Activated CD8-positive, alpha-beta T cell treated with anti-CD3 and anti-CD28 coated beads for 36 hours (primary cell): ENCODE measurements at regions of chr2 and their contacts with region 1.

Region 1: GRCh38 chr2:241636255-241636999 is 531 bp downstream of the THAP4 start:
- DNase-seq: peak; percentile 48
- ATAC-seq: peak; percentile 49
- H3K4me3 Mint-ChIP-seq: peak overlapping the region; percentile 84
- H3K27ac Mint-ChIP-seq: peak overlapping the region; percentile 82
- H3K4me1 Mint-ChIP-seq: peaks cover 48% of the 10 kb centered on the region
- H3K27me3 Mint-ChIP-seq: no peaks in the 10 kb centered on the region
- CTCF ChIP-seq: no peak

Region 2: GRCh38 chr2:241564596-241565410 is 71.6 kb before region 1 on chr2:
- CTCF ChIA-PET with region 1: no interaction called
- POLR2A ChIA-PET with region 1: no interaction called
- intact Hi-C with region 1: no loop called
- DNase-seq: peak; percentile 22
- ATAC-seq: peak; percentile 45
- H3K4me3 Mint-ChIP-seq: no peak overlapping the region
- H3K27ac Mint-ChIP-seq: no peak overlapping the region
- H3K4me1 Mint-ChIP-seq: peaks cover 2% of the 10 kb centered on the region
- H3K27me3 Mint-ChIP-seq: peaks cover 10% of the 10 kb centered on the region
- CTCF ChIP-seq: no peak

Region 3: GRCh38 chr2:241617431-241618154 is 18.8 kb before region 1 on chr2:
- CTCF ChIA-PET with region 1: no interaction called
- POLR2A ChIA-PET with region 1: interaction called, 10 read pairs
- intact Hi-C with region 1: no loop called
- DNase-seq: peak; percentile 61
- ATAC-seq: peak; percentile 59
- H3K4me3 Mint-ChIP-seq: peak overlapping the region; percentile 64
- H3K27ac Mint-ChIP-seq: peak overlapping the region; percentile 93
- H3K4me1 Mint-ChIP-seq: peaks cover 48% of the 10 kb centered on the region
- H3K27me3 Mint-ChIP-seq: no peaks in the 10 kb centered on the region
- CTCF ChIP-seq: no peak